ENCODE measurements at regions of chr18 and their contacts with region 1.

Region 1: GRCh38 chr18:49656073-49656591 is 94.3 kb downstream of the LIPG start:
- DNase-seq: no peak
- ATAC-seq: no peak
- H3K4me3 ChIP-seq: no peak overlapping the region
- H3K27ac ChIP-seq: no peak overlapping the region
- H3K4me1 ChIP-seq: peaks cover 0 to 13% (median 0%) of the 10 kb centered on the region in 9 donors
- H3K27me3 ChIP-seq: peaks cover 0 to 12% (median 0%) of the 10 kb centered on the region in 7 donors
- CTCF ChIP-seq: no peak

Region 2: DNA sequence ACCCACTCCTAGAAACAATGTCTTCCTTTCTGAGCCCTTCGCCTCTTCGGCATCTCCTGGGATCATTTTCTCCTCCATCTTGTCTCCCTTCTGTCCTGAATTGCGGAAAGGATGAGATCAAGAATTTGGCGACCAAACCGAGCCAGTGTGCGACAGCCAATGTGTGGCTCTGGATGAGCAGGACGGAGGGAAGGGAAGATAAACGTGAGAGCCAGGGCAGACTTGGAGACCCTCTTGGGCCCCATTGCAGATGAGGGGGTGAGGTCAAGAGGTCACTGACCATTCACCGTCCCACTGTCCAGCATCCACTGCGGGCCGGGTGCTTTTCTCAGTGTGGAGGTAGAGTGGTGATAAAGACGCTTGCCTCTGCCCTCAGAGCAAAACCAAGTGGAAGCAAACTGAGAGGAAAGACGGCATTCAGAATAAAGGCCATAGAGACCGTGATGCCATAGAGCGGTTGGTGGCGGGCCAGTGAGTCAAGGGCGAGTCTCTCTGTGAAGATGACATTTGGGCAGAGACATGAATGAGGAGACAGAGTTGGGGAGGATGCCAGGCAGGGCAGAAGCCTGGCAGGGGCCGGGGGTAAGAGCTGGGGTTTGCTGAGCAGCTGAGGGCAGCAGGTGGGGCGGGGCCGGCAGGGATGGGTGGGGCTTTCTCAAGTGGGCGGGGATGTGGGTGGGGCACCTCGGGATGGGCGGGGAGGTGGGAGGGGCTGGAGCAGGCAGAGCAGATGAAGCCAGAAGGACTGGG is 101.6 kb after region 1 on chr18:
- intact Hi-C with region 1: loop called in 1 of 10 experiments (anchors 10 kb)
- DNase-seq: no peak
- ATAC-seq: no peak
- H3K4me3 ChIP-seq: no peak overlapping the region
- H3K27ac ChIP-seq: no peak overlapping the region
- H3K4me1 ChIP-seq: no peaks in the 10 kb centered on the region
- H3K27me3 ChIP-seq: peaks cover 0 to 14% (median 8%) of the 10 kb centered on the region in 7 donors
- CTCF ChIP-seq: no peak

Measured in heart right ventricle (tissue), 16 donors.